Mammary epithelial cell (primary cell): ENCODE measurements at regions of chr3 and their contacts with region 1.

Region 1: DNA sequence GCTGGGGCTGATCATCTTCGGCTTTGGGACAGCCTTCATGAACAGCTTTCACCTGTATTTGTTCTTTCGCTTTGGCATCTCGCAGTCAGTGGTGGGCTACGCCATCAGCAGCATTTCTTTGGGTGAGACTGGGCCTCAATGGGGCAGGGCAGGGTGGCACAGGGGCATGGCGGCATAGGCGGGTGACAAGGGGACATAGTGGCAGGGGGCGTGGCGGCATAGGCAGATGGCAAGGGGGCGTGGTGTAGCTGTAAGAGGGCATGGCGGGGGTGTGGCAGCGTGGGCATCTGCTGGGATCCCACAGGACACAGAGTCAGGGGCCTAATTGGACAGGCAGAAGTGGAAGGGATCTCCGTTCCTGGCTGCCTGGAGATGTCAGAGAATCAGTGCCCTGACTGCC is 25.5 kb downstream of the SLC22A14 start:
- DNase-seq: no peak
- H3K4me3 ChIP-seq: no peak overlapping the region
- H3K27ac ChIP-seq: no peak overlapping the region
- H3K4me1 ChIP-seq: no peaks in the 10 kb centered on the region
- H3K27me3 ChIP-seq: no peaks in the 10 kb centered on the region
- CTCF ChIP-seq: no peak

Region 2: GRCh38 chr3:38247366-38248035 is 60.1 kb before region 1 on chr3:
- CTCF ChIA-PET with region 1: no interaction called
- dilution Hi-C with region 1: loop called (anchors 5 kb)
- in situ Hi-C with region 1: no loop called
- intact Hi-C with region 1: no loop called
- DNase-seq: peak; percentile 91
- H3K4me3 ChIP-seq: no peak overlapping the region
- H3K27ac ChIP-seq: peak overlapping the region; percentile 53
- H3K4me1 ChIP-seq: peaks cover 12% of the 10 kb centered on the region
- H3K27me3 ChIP-seq: no peaks in the 10 kb centered on the region
- CTCF ChIP-seq: peak; percentile 31 to 55

Region 3: DNA sequence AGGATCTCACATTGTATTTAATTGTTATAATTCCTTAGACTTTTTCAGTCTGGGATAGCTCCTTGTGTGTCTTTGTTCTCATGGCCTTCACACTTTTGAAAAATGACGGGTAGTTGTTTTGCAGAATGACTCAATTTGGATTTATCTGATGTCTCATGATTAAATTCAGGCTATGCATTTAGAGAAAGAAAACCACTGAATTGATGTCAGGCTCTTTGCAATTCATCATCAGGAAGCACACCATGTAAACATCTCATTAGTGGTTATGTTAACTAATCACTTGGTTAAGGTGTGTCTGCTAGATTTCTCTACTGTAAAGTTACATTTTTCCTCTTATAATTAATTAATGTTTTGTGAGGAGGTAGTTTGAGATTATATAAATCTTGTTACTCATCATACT is 50.0 kb before region 1 on chr3:
- CTCF ChIA-PET with region 1: no interaction called
- dilution Hi-C with region 1: no loop called
- in situ Hi-C with region 1: no loop called
- intact Hi-C with region 1: no loop called
- DNase-seq: no peak
- H3K4me3 ChIP-seq: no peak overlapping the region
- H3K27ac ChIP-seq: no peak overlapping the region
- H3K4me1 ChIP-seq: no peaks in the 10 kb centered on the region
- H3K27me3 ChIP-seq: no peaks in the 10 kb centered on the region
- CTCF ChIP-seq: no peak

Region 4: DNA sequence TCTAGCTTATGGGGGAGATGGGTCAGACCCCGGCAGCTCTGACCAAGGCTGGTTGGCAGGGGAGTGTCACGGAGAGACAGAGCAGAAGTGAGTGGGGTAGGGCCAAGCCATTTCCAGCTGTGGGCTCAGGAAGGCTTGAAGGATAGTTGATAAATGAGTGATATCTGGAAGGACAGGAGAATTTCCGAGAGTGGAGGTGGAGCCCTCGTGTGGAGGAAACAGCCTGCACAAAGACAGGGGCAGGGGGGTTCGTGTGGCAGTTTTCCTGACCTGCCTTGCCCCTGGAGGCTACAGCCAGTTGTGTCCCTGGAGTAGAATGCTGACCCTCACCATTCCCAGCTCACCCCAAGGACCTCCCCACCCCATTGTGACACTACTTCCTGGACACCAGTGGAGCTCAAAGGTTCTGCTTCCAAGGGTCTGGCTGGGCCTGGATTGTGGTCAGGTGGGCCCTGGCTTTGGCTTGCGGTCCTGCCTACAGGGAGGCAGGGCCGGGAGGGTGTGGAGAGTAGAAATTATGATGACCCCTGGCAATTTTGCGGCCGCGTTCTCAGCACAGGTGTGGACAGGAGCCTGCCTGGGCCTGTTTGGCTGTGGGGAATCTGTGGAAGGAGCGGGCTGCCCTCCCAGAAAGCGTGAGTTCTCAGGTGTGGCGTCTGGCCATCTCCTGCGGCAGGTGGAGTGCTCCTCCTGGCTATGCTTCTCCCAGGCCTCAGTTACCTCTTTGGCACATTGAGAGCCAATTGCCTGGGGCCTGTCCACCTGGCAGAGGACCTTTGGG is 25.5 kb before region 1 on chr3 and contains the start of gene SLC22A14:
- CTCF ChIA-PET with region 1: no interaction called
- dilution Hi-C with region 1: no loop called
- in situ Hi-C with region 1: no loop called
- intact Hi-C with region 1: no loop called
- DNase-seq: peak; percentile 58
- H3K4me3 ChIP-seq: no peak within 1 kb of the TSS
- H3K27ac ChIP-seq: no peak within 1 kb of the TSS
- H3K4me1 ChIP-seq: peaks cover 4% of the 10 kb centered on the region
- H3K27me3 ChIP-seq: no peaks in the 10 kb centered on the region
- CTCF ChIP-seq: peak in 1 of 2 donors; percentile 16
- total RNA-seq, gene SLC22A14: 0.33 to 0.75 TPM

Region 5: DNA sequence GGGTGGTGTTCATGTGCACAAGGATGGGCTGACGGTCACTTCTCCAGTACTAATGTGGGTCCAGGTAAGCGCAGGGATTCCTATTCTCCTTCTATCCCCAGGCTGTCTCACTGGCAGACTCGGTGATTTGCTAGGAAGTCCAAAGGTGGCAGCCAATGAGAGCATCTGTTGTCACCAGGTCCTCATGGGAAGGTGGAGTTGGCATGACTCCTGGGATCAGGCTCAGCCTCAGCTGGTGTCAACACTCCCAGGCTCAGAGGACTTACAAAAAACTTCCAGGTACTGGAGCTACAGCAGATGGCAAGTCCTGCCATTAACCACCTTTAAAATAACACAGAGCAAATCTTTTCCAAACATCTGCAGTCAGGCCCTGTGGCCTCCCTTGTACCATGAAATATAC is 52.7 kb after region 1 on chr3:
- CTCF ChIA-PET with region 1: no interaction called
- dilution Hi-C with region 1: loop called (anchors 5 kb)
- in situ Hi-C with region 1: no loop called
- intact Hi-C with region 1: no loop called
- DNase-seq: no peak
- H3K4me3 ChIP-seq: no peak overlapping the region
- H3K27ac ChIP-seq: no peak overlapping the region
- H3K4me1 ChIP-seq: no peaks in the 10 kb centered on the region
- H3K27me3 ChIP-seq: no peaks in the 10 kb centered on the region
- CTCF ChIP-seq: no peak